PC-9 (cell line): ENCODE measurements at regions of chr3 and their contacts with region 1.

Region 1: DNA sequence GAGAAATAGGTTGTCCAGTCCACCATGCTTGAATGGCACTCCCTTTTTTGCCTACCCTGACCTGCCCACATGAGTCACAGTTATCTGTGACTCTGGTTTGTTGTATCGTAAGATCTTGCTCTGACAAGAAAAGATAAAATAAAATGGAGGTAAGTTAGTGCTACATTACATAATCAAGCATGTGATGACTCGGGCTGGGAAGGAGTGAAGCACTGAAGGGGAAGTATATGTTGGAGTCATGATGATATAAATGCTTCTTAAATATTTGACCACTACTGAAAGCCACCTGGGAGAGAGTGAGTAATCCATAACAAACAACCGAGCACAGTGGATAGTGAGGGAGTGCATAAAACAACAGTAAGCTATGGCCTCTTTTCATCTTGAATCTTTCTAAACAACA is 124.4 kb downstream of the SHOX2 start:
- DNase-seq: no peak
- H3K4me3 ChIP-seq: no peak overlapping the region
- H3K27ac ChIP-seq: no peak overlapping the region
- H3K4me1 ChIP-seq: no peaks in the 10 kb centered on the region
- H3K27me3 ChIP-seq: no peaks in the 10 kb centered on the region
- CTCF ChIP-seq: no peak

Region 2: GRCh38 chr3:158012901-158013300 is 31.1 kb after region 1 on chr3:
- CTCF ChIA-PET with region 1: no interaction called
- POLR2A ChIA-PET with region 1: no interaction called
- intact Hi-C with region 1: loop called (anchors 1 kb)
- DNase-seq: no peak
- H3K4me3 ChIP-seq: no peak overlapping the region
- H3K27ac ChIP-seq: no peak overlapping the region
- H3K4me1 ChIP-seq: no peaks in the 10 kb centered on the region
- H3K27me3 ChIP-seq: no peaks in the 10 kb centered on the region
- CTCF ChIP-seq: no peak

Region 3: DNA sequence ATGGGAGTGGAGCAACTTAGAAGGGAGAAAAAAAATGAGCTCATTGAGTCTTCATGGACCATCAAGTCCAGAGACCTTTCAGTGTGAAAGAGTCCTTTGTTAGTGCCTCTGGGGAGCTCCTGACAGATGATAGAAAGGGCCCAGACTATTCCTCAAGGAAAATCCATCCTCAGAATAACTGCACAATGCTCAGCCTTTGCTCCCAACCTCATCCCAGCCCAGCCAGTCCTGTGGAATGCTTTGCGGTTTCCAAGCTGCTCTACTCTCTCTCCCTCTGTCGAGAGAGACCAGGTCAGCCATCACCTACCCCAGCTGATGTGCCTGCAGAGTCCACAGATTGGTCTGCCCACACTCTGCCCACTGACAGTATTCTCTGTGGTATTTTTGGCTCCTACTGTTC is 1226.2 kb after region 1 on chr3:
- CTCF ChIA-PET with region 1: no interaction called
- POLR2A ChIA-PET with region 1: no interaction called
- intact Hi-C with region 1: no loop called
- DNase-seq: peak in 1 of 2 experiments; percentile 24
- H3K4me3 ChIP-seq: no peak overlapping the region
- H3K27ac ChIP-seq: no peak overlapping the region
- H3K4me1 ChIP-seq: no peaks in the 10 kb centered on the region
- H3K27me3 ChIP-seq: no peaks in the 10 kb centered on the region
- CTCF ChIP-seq: no peak